WTC11 (cell line): ENCODE measurements at regions of chr2 and their contacts with region 1.

Region 1: DNA sequence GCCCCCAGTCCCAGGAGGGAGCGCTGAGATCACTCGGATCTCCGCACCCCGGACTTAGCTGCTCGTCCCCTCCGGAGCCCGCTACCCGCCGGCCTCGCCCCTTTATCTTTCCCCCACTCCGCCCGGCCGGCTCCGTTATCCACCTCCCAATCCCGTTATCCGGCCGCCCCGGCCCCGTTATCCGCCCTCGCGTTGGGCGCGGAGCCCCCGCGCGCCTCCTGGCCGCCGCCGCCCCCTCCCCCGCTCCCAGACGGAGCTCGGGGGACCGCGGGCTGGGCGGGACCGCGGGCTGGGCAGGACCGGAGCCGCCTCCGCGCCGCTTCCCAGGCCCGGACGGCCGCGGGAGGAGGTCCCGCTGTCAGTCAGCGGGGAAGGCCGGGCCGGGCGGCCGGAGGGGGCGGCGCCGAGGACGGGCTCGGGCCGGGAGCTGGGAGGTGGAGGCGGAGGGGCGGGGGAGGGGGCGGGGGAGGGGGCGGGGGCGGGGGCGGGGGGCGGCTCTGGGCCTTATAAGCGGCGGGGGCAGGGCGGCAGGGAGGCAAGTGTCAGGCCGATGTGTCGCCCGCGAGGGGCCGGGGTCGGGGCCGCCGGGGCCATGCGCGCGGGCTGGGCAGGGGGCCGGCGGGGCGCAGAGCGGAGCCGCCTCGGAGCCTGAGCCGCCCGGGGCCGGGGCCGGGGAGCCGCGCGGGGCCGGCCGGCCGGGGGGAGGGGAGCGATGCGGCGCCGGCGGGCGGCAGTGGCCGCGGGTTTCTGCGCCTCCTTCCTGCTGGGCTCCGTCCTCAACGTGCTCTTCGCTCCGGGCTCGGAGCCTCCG is at the start of gene PKDCC:
- DNase-seq: peak; percentile 85
- ATAC-seq: peak; percentile 66
- H3K4me3 Mint-ChIP-seq: peak within 1 kb of the TSS; percentile 79
- H3K27ac Mint-ChIP-seq: peak within 1 kb of the TSS; percentile 80; the same call in 1 of the 2 replicates
- H3K4me1 Mint-ChIP-seq: peaks cover 72% of the 10 kb centered on the region
- H3K27me3 Mint-ChIP-seq: peaks cover 20% of the 10 kb centered on the region
- CTCF ChIP-seq: no peak
- total RNA-seq, gene PKDCC: 15.1 to 27.3 TPM (median 15.6 TPM) in 3 replicates

Region 2: DNA sequence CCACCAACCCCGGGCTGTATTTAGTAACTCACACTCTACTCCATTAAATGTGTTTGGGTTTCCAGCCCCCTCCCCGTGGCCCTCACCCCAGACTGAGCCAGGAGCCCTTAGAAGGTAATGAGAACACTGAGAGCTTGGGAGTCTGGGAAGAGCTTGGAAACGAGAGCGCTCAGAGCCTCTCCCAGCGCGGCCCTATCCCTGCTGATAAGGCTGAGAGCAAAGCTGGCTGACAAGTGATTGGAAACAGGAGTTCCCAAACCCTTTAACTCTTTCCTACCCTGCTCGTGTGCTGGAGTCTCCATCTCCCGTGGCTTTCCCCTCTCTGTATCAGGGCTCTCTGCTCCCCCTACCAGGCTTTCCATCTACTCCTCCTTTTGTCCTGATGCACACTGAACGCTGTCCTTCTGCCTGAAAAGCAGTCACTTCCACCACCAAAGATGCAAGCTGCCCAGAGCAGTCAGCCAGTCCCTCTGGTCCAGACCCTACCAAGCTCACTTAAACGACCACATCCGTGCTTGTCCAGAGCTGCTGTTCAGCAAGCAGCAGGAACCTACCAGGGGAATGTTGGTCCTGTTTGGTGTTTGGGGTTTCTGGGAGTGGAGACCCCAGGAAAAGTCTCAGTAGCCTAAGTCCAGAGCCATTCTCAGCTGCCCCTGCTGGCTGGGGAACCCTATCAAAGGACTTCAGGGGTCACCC is 99.8 kb before region 1 on chr2:
- CTCF ChIA-PET with region 1: interaction called, 10 read pairs
- POLR2A ChIA-PET with region 1: interaction called, 22 read pairs
- DNase-seq: no peak
- ATAC-seq: peak; percentile 60
- H3K4me3 Mint-ChIP-seq: peak overlapping the region; percentile 34
- H3K27ac Mint-ChIP-seq: peak overlapping the region; percentile 64
- H3K4me1 Mint-ChIP-seq: peaks cover 58% of the 10 kb centered on the region
- H3K27me3 Mint-ChIP-seq: peaks cover 16% of the 10 kb centered on the region
- CTCF ChIP-seq: no peak

Region 3: GRCh38 chr2:42028571-42029148 is 19.0 kb before region 1 on chr2:
- CTCF ChIA-PET with region 1: interaction called, 13 read pairs
- POLR2A ChIA-PET with region 1: interaction called, 9 read pairs
- DNase-seq: no peak
- ATAC-seq: no peak
- H3K4me3 Mint-ChIP-seq: no peak overlapping the region
- H3K27ac Mint-ChIP-seq: no peak overlapping the region
- H3K4me1 Mint-ChIP-seq: peaks cover 69% of the 10 kb centered on the region
- H3K27me3 Mint-ChIP-seq: peaks cover 34% of the 10 kb centered on the region
- CTCF ChIP-seq: no peak

Region 4: DNA sequence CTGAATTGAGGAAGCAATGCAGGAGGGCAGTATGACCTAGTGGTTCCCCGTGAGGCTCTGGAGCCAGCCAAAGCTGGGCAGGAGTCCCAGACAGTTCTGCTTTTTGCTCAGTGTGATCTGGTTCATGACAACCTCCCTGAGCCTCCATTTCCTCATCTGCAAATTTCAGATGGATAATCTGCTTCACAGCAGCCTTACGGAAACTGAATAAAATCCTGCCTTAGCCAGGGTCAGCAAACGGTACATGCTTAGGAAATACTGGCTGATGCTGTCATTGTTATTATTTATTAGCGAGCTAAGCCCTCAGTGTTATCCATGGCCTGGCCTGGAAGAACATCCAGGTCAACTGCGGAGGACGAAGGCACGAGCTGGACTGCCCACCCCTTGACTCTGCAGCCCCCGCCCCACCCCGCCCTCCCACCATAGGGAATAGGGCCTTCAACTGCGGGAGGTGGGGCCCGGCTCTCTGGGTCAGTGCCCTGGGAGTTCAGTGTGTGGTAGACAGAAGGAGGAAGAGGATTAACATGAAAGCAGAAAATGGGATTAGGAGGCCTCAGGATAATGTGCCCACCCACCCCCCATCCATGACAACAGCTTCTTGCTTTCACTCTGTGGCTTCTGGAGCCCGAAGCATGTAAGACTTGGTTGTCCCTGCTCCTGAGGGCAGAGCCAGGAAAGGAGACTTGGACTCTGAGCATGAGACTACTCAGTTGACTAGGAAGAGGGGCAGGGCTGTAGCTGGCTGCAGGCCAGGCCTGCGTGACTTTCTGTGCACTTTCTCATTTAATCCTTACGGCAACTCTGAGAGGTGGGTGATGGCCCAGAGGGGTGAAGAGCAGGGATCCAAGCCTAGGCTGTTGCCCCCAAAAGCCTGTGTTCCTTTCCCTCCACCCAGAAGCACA is 13.3 kb after region 1 on chr2:
- CTCF ChIA-PET with region 1: no interaction called
- POLR2A ChIA-PET with region 1: no interaction called
- DNase-seq: no peak
- ATAC-seq: no peak; the same call in 1 of the 2 replicates
- H3K4me3 Mint-ChIP-seq: no peak overlapping the region
- H3K27ac Mint-ChIP-seq: no peak overlapping the region
- H3K4me1 Mint-ChIP-seq: peaks cover 4% of the 10 kb centered on the region
- H3K27me3 Mint-ChIP-seq: no peaks in the 10 kb centered on the region
- CTCF ChIP-seq: no peak

Region 5: DNA sequence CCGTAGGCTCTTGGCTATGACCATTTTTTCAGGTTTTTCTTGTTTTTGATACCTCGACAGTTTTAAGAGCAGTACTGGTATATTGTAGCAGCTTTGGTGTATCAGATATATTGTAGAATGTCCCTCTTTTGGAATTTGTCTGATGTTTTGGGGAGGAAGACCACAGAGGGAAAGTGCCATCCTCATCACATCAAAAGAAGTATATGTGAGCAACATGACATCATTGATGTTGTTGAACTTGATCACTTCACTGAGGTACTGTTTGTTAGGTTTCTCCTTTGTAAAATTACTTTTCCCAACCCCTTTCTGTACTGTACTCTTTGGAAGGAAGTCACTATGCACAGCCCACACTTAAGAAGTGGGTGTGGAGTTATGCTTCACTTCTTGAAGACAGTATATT is 162.5 kb after region 1 on chr2:
- CTCF ChIA-PET with region 1: no interaction called
- POLR2A ChIA-PET with region 1: no interaction called
- DNase-seq: no peak
- ATAC-seq: no peak
- H3K4me3 Mint-ChIP-seq: no peak overlapping the region
- H3K27ac Mint-ChIP-seq: 0 out of 2 replicates have a peak overlapping the region, but pooled peaks have one; percentile 39
- H3K4me1 Mint-ChIP-seq: peaks cover 22% of the 10 kb centered on the region
- H3K27me3 Mint-ChIP-seq: no peaks in the 10 kb centered on the region
- CTCF ChIP-seq: no peak